ENCODE measurements at regions of chr17 and their contacts with region 1.

Region 1: GRCh38 chr17:43878260-43879175 is 28.8 kb downstream of the MPP2 start:
- DNase-seq: peak; percentile 71
- H3K4me3 ChIP-seq: no peak overlapping the region
- H3K27ac ChIP-seq: no peak overlapping the region
- H3K4me1 ChIP-seq: no peaks in the 10 kb centered on the region
- H3K27me3 ChIP-seq: peaks cover 3 to 4% of the 10 kb centered on the region in 2 experiments
- CTCF ChIP-seq: peak; percentile 93 to 100
- POLR2A ChIP-seq: no peak

Region 2: DNA sequence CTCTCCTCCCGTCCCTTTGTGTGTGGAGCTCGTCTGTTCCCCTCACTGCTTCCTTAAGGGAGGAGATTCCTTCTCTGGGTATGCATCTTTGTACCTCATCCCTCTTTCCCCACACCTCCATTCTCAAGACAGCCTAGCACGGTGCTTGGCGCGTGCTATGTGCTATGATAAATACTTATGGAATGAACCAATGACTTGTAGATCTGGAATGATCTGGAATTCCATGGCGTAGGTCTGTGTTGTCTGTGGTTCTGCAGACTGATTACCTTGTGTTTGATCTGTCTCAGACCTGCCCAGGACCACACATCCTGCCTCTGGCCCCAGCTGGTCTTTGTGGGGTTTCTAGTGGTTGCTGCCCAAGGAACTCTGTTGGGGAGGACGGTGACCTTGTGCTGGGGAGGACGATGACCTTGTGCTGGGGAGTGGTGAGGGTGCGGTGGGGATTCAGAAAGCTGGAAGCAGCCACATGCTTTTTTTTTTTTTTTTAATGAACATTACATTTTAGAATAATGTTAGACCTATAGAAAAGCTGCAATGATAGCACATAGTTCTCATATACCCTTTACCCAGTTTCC is 298.9 kb before region 1 on chr17:
- CTCF ChIA-PET with region 1: no interaction called
- POLR2A ChIA-PET with region 1: no interaction called
- dilution Hi-C with region 1: no loop called
- intact Hi-C with region 1: no loop called
- DNase-seq: no peak
- H3K4me3 ChIP-seq: no peak overlapping the region
- H3K27ac ChIP-seq: peak overlapping the region; percentile 72
- H3K4me1 ChIP-seq: peaks cover 19% of the 10 kb centered on the region
- H3K27me3 ChIP-seq: no peaks in the 10 kb centered on the region
- CTCF ChIP-seq: no peak
- POLR2A ChIP-seq: no peak

Region 3: GRCh38 chr17:43891851-43892646 is 13.5 kb after region 1 on chr17:
- CTCF ChIA-PET with region 1: interaction called, 69 read pairs
- POLR2A ChIA-PET with region 1: no interaction called
- dilution Hi-C with region 1: no loop called
- intact Hi-C with region 1: no loop called
- DNase-seq: no peak
- H3K4me3 ChIP-seq: no peak overlapping the region
- H3K27ac ChIP-seq: no peak overlapping the region
- H3K4me1 ChIP-seq: no peaks in the 10 kb centered on the region
- H3K27me3 ChIP-seq: peaks cover 3% of the 10 kb centered on the region in 2 experiments
- CTCF ChIP-seq: no peak
- POLR2A ChIP-seq: no peak

Region 4: DNA sequence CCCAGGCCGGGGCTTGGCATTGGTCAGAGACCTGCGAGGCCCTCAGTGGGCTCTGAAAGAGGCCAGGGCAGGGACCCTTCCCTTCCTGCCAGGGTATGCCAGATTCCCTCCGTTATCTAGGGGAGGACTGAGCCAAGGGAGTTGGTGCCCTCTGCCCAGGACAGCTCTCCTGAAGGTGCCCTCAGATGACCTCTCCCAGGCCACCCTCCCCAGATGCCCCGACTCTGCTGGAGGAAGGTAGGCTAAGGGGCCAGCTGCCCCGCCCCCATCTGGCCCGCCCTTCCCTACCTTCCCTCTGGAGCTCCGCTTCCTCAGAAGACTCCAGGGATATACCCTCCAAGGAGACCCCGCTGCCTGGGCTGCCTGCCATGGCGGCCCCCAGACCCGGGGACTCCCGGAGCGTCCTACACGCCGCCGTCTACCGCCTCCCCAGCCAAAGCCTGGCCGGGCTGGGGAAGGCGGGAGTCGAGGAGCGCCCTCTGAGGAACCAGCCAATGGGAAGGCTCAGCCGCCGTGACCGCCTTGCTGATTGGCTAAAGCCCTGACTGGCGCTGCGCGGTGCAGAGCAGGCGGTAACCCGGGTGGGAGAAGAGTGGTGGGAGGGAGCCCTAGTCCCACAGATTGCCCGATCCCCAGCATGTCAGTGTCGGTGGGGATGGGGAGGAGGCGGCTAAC is 21.8 kb after region 1 on chr17:
- CTCF ChIA-PET with region 1: interaction called, 69 read pairs
- POLR2A ChIA-PET with region 1: no interaction called
- dilution Hi-C with region 1: no loop called
- intact Hi-C with region 1: no loop called
- DNase-seq: peak; percentile 85
- H3K4me3 ChIP-seq: peak overlapping the region in 2 of 3 experiments; percentile 26 to 29
- H3K27ac ChIP-seq: no peak overlapping the region
- H3K4me1 ChIP-seq: peaks cover 3% of the 10 kb centered on the region
- H3K27me3 ChIP-seq: peaks cover 4 to 6% of the 10 kb centered on the region in 2 experiments
- CTCF ChIP-seq: no peak
- POLR2A ChIP-seq: no peak

Region 5: GRCh38 chr17:43907425-43907981 is 29.0 kb after region 1 on chr17 and contains the start of gene MPP2:
- CTCF ChIA-PET with region 1: interaction called, 15 read pairs
- POLR2A ChIA-PET with region 1: no interaction called
- dilution Hi-C with region 1: no loop called
- intact Hi-C with region 1: no loop called
- DNase-seq: peak; percentile 55
- H3K4me3 ChIP-seq: peak within 1 kb of the TSS in 1 of 3 experiments; percentile 26
- H3K27ac ChIP-seq: no peak within 1 kb of the TSS
- H3K4me1 ChIP-seq: peaks cover 3% of the 10 kb centered on the region
- H3K27me3 ChIP-seq: peaks cover 44 to 51% of the 10 kb centered on the region in 2 experiments
- CTCF ChIP-seq: peak in 1 of 2 donors; percentile 23
- POLR2A ChIP-seq: no peak
- total RNA-seq, gene MPP2: 1.2 and 1.6 TPM in 2 replicates

Region 6: DNA sequence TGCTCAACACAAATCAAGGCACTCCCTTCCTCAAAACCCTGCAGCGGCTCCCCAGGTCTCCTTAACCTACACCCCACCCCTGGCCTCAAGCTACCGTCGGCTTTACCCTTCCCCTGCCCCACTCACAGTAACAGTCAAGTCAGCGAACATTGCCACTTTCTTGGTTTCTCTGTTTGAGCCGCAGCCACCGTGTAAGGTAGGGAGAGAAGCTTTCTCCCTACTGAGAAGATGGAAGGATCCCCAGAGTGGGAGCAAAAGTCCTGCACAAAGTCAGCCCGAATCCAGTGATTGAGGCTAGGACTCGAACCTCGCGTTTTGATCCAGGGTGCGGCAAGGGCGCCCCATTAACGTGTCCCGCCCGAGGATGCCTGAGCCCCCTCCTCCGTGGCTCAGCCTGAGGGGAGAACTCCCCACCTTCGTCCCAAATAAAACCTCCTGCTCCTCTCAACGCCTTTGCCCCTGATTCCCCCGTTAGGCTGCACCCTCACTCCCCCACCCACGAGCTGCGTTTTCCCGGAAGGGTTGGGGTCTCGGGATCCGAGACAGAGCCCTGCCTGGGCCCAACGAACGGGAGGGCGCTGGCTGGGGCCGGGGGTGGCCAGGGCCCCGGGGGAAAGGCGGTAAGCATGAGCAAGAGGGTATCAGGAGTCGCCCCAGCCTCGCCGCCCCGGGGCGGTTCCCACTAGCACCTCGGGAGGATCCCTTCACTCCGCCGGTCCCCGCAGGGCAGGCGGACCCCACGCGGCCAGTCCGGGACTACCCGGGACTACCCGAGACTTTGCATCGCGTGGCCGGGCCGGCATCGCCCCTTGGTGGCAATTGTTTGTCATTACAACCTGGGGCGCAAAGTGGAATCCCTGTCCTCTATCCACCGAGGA is 116.0 kb after region 1 on chr17:
- CTCF ChIA-PET with region 1: interaction called, 13 read pairs
- POLR2A ChIA-PET with region 1: no interaction called
- dilution Hi-C with region 1: no loop called
- intact Hi-C with region 1: loop called (anchors 1 kb)
- DNase-seq: peak; percentile 57
- H3K4me3 ChIP-seq: peak overlapping the region in 2 of 3 experiments; percentile 1 to 38
- H3K27ac ChIP-seq: no peak overlapping the region
- H3K4me1 ChIP-seq: peaks cover 5% of the 10 kb centered on the region
- H3K27me3 ChIP-seq: peaks cover 0 to 3% of the 10 kb centered on the region in 2 experiments
- CTCF ChIP-seq: peak; percentile 80 to 89
- POLR2A ChIP-seq: no peak

Measured in endothelial cell of umbilical vein (primary cell).